Lower lobe of right lung (tissue), 2 donors: ENCODE measurements at regions of chr12 and their contacts with region 1.

Region 1: GRCh38 chr12:25126071-25126470 is 68.9 kb downstream of the DNAI7 start:
- DNase-seq: no peak
- ATAC-seq: no peak
- H3K4me3 ChIP-seq: no peak overlapping the region
- H3K27ac ChIP-seq: no peak overlapping the region
- H3K4me1 ChIP-seq: no peaks in the 10 kb centered on the region
- H3K27me3 ChIP-seq: no peaks in the 10 kb centered on the region
- CTCF ChIP-seq: no peak

Region 2: DNA sequence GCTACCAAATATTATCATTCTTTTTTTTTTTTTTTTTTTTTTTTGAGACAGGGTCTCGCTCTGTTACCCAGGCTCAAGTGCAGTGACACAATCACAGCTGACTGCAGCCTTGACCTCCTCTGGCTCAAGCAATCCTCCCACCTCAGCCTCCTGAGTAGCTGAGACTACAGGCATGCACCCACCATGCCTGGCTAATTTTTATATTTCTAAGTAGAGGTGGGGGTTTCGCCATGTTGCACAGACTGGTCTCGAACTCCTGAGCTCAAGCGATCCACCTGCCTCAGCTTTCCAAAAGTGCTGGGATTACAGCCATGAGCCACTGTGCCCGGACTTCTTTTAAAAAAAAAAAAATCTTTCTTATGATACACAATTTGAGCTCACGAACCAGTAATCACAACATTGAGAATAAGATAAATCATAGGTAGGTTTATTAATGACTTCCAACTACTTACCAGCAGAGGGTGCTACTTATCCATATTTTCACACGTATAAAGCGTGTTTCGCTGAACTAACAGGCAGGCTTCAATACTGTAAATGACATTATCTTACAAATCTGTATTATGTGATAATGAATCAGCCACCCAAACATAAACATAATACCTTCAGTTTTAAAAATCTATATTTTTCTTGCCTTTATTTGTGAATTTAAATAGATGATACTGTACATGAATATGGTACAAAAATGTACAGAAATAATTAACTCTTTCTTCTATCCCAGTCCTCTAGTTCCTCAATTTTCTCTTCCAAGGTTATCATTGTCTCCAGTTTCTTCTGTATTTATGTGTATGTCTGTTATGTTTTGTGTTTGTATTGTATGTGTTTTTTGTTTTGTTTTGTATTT is 134.6 kb before region 1 on chr12:
- intact Hi-C with region 1: loop called (anchors 5 kb)
- DNase-seq: no peak
- ATAC-seq: peak; percentile 87 to 93
- H3K4me3 ChIP-seq: no peak overlapping the region
- H3K27ac ChIP-seq: no peak overlapping the region
- H3K4me1 ChIP-seq: no peaks in the 10 kb centered on the region
- H3K27me3 ChIP-seq: no peaks in the 10 kb centered on the region
- CTCF ChIP-seq: peak; percentile 63

Region 3: DNA sequence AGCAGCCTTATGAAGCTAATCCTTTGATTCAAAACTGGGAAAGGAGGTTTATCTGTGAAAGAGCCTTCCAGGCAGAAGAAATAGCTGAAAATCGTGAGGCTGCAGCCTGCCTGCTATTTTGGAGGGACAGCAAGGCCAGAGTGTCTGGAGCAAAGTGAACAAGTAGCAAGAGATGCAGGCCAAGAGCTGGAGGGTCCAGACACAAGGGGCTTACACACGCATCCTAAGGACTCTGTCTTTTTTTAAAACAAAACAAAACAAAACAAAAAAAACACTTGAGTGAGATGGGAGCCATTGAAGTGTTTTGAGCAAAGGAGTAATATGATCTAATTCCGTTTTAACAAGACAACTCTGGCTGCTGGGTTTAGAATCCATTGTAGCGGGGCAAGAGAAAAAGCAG is 100.8 kb before region 1 on chr12:
- intact Hi-C with region 1: no loop called
- DNase-seq: no peak
- ATAC-seq: no peak
- H3K4me3 ChIP-seq: no peak overlapping the region
- H3K27ac ChIP-seq: no peak overlapping the region
- H3K4me1 ChIP-seq: no peaks in the 10 kb centered on the region
- H3K27me3 ChIP-seq: no peaks in the 10 kb centered on the region
- CTCF ChIP-seq: no peak

Region 4: DNA sequence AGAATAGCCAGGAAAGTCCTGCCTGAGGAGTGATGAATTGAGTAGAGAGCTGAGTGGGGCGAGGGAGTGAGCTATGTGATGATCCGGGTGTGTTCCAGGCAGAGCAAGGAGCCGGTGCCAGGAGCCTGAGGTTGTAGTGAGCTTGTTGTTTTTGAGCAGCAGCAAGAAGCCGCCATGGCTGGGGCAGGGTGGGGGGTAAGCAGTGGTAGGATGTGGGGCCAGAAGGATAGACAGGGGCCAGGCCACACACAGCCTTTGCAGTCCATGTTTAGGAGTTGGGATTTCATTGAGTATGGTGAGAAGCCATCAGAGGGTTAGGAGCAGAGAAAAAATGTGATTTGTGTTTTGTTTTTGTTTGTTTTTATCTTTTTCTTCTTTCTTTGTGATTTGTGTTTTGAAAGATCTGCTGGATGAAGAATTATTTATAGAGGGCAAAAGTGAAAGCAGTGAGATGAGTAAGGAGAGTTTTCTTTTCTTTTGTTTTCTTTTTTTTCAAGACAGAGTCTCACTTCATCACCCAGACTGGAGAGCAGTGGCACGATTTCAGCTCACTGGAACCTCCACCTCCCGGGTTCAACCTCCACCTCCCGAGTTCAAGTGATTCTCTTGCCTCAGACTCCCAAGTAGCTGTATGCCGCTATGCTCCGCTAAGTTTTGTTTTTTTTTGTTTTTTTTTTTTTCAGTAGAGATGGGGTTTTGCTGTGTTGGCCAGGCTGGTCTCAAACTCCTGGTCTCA is 84.9 kb before region 1 on chr12:
- intact Hi-C with region 1: no loop called
- DNase-seq: no peak
- ATAC-seq: peak in 1 of 2 donors; percentile 33
- H3K4me3 ChIP-seq: no peak overlapping the region
- H3K27ac ChIP-seq: peak overlapping the region; percentile 26
- H3K4me1 ChIP-seq: no peaks in the 10 kb centered on the region
- H3K27me3 ChIP-seq: no peaks in the 10 kb centered on the region
- CTCF ChIP-seq: no peak

Region 5: DNA sequence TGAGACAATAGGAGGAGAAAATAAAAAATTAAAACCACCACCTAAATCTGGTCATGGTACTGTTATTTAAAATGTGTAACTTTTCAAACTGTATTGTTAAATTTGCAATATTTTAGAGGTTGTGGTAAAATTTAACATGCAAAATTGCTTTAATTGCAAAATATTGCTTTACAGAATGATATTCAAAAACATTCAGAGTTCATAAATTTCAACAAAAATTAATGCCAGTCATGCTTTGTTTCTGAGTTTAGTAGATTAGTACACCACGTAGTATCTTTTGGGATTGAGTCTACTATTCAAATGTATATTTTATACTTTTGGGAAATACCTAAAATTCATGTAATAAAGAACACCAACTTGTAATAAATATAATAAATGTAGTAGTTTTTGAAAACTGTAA is 87.3 kb after region 1 on chr12:
- intact Hi-C with region 1: no loop called
- DNase-seq: no peak
- ATAC-seq: no peak
- H3K4me3 ChIP-seq: no peak overlapping the region
- H3K27ac ChIP-seq: no peak overlapping the region
- H3K4me1 ChIP-seq: no peaks in the 10 kb centered on the region
- H3K27me3 ChIP-seq: no peaks in the 10 kb centered on the region
- CTCF ChIP-seq: no peak